WTC11 (cell line): ENCODE measurements at regions of chr14 and their contacts with region 1.

Region 1: GRCh38 chr14:39232554-39233415 is 930 bp upstream of the MIA2 start:
- DNase-seq: no peak
- ATAC-seq: no peak
- H3K4me3 Mint-ChIP-seq: no peak overlapping the region
- H3K27ac Mint-ChIP-seq: no peak overlapping the region
- H3K4me1 Mint-ChIP-seq: peaks cover 6% of the 10 kb centered on the region
- H3K27me3 Mint-ChIP-seq: no peaks in the 10 kb centered on the region
- CTCF ChIP-seq: no peak

Region 2: DNA sequence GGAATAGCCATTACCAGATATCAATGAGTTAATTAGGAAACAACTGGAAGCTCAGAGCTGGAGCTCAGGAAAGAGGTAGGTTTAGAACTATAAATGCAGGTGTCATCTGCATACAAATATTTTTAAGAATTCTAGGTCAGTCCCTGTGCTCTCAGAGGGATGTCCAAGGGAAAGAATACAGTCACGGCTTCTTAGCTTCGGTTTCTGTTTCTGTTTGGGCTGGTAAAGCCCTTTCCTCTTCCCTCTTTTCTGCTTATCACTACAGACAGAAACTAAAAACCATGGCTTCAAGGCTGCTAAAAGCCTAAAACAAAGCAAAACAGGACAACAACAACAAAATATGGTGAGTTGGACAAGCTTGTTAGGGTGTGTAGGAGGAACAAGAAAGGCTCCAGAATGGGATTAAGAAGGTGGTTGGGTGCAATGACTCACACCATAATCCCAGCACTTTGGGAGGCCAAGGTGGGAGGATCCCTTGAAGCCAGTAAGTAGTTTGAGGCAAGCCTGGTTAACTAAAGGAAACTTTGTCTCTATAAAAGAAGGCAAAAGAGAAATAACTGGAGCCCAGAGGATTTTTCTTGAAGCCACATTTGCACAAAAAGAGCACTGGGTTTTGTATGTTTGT is 242.8 kb before region 1 on chr14:
- CTCF ChIA-PET with region 1: no interaction called
- POLR2A ChIA-PET with region 1: no interaction called
- DNase-seq: no peak
- ATAC-seq: no peak
- H3K4me3 Mint-ChIP-seq: no peak overlapping the region
- H3K27ac Mint-ChIP-seq: no peak overlapping the region
- H3K4me1 Mint-ChIP-seq: no peaks in the 10 kb centered on the region
- H3K27me3 Mint-ChIP-seq: no peaks in the 10 kb centered on the region
- CTCF ChIP-seq: no peak

Region 3: DNA sequence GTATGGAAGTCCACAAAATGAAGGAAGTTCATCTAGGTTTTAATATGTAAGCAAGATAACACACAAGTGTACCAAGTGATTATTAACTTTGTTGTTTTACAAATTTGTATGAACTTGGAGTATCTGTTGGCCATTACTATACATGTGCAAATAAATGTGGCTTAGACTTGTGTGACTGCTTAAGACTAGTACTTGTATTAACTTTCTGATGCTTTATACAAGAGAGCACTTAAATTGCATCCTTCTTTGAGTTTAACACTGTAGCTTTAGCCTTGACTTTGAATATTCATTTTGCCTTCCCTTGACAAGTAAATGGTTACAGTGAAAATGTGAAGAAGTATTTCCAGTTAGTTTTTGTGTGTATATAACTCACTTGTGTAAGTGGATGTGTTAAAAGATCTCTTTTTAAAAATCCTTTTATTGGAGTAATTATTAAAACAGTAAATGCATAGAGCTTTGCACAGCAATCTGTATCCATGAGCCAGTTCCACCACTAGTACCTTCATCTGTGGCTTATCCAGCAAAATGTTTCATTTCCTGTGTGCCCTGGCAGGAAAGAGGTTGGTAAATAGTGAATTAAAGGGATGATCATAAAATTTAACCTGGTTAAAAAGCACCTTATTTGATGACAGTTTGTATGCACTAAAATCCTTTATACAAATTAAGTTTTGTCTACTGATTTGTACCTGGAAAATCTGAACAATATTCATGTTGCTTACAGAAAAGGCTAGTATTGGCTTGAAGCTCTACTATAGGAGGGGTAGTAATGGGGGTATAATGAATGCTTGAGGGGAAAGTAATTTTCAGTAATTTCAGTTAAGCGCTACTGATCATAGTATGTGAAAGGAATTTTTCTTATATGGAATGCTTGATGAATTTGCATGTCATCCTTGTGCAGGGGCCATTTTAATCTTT is 49.8 kb before region 1 on chr14:
- CTCF ChIA-PET with region 1: no interaction called
- POLR2A ChIA-PET with region 1: no interaction called
- DNase-seq: no peak
- ATAC-seq: no peak
- H3K4me3 Mint-ChIP-seq: no peak overlapping the region
- H3K27ac Mint-ChIP-seq: peak overlapping the region; percentile 20
- H3K4me1 Mint-ChIP-seq: peaks cover 24% of the 10 kb centered on the region
- H3K27me3 Mint-ChIP-seq: no peaks in the 10 kb centered on the region
- CTCF ChIP-seq: no peak

Region 4: GRCh38 chr14:39368261-39368959 is 135.6 kb after region 1 on chr14:
- CTCF ChIA-PET with region 1: interaction called, 31 read pairs
- POLR2A ChIA-PET with region 1: interaction called, 3 read pairs
- DNase-seq: peak; percentile 75
- ATAC-seq: peak; percentile 81
- H3K4me3 Mint-ChIP-seq: no peak overlapping the region
- H3K27ac Mint-ChIP-seq: peak overlapping the region; percentile 82
- H3K4me1 Mint-ChIP-seq: peaks cover 35% of the 10 kb centered on the region
- H3K27me3 Mint-ChIP-seq: no peaks in the 10 kb centered on the region
- CTCF ChIP-seq: peak; percentile 33; the same call in 1 of the 2 replicates

Region 5: GRCh38 chr14:39426605-39427004 is 193.8 kb after region 1 on chr14:
- CTCF ChIA-PET with region 1: interaction called, 14 read pairs
- POLR2A ChIA-PET with region 1: no interaction called
- DNase-seq: no peak
- ATAC-seq: peak; percentile 46
- H3K4me3 Mint-ChIP-seq: no peak overlapping the region
- H3K27ac Mint-ChIP-seq: peak overlapping the region; percentile 33; the same call in 1 of the 2 replicates
- H3K4me1 Mint-ChIP-seq: peaks cover 23% of the 10 kb centered on the region
- H3K27me3 Mint-ChIP-seq: no peaks in the 10 kb centered on the region
- CTCF ChIP-seq: no peak